SK-N-SH (cell line): ENCODE measurements at regions of chr1 and their contacts with region 1.

Region 1: DNA sequence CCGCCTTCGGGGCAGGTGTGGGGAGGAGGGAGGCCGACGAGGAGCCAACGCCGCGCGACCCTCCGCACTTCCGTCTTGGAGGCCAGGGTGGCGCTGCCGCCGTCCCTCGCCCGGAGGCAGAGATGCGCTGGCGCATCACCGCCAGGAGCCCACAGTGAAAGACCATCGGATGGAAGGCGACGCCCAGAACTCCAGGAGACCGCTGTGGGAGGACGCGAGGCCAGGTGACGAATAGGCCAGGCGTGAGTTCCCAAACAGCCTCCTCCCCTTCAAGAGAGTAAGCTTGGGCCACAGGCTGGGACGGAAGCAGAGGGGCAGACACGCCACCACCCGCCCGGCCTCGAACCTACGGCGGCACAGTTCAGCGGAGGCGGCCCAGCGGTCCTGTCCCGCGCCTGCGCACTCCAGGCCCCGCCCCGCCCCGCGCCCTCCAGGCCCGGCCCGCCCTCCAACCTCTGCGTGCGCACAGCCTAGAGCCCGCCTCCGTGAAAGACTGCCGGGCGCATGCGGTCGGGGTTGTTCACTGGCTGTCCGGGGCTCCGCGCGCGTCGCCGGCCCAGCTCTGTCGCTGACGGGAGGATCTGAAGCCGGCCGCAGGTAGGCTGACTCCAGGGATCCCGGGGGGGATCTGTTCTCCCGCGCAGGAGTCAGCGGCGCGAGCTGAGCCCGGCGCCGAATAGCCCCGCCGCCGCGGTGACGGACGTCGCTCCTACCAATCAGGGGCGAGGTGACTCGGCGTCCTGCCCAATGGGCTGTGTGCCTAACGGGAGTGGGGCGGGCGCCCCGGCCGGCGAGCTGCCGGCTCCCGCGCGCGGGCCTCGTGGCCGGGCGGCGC is at the start of gene CTPS1:
- DNase-seq: peak; percentile 99
- H3K4me3 ChIP-seq: peak within 1 kb of the TSS; percentile 73 to 74
- H3K27ac ChIP-seq: peak within 1 kb of the TSS; percentile 87 to 94
- H3K4me1 ChIP-seq: peaks cover 23 to 33% of the 10 kb centered on the region in 2 experiments
- H3K27me3 ChIP-seq: no peaks in the 10 kb centered on the region
- CTCF ChIP-seq: peak; percentile 44
- EP300 ChIP-seq: no peak
- RAD21 ChIP-seq: no peak
- polyA plus RNA-seq, gene CTPS1: 34.4 and 34.5 TPM in 2 replicates

Region 2: GRCh38 chr1:41003640-41004220 is 24.3 kb after region 1 on chr1:
- CTCF ChIA-PET with region 1: interaction called, 16 read pairs
- POLR2A ChIA-PET with region 1: interaction called, 14 read pairs
- DNase-seq: peak; percentile 86
- H3K4me3 ChIP-seq: no peak overlapping the region
- H3K27ac ChIP-seq: peak overlapping the region; percentile 75 to 82
- H3K4me1 ChIP-seq: peaks cover 12 to 18% of the 10 kb centered on the region in 2 experiments
- H3K27me3 ChIP-seq: no peaks in the 10 kb centered on the region
- CTCF ChIP-seq: peak; percentile 72
- EP300 ChIP-seq: peak; percentile 51 to 86; a peak in 3 of 4 replicates
- RAD21 ChIP-seq: peak; percentile 71